Activated CD4-positive, alpha-beta T cell treated with anti-CD3 and anti-CD28 coated beads for 36 hours (primary cell): ENCODE measurements at regions of chr4 and their contacts with region 1.

Region 1: GRCh38 chr4:72302981-72303704 is 265.9 kb downstream of the ADAMTS3 start:
- DNase-seq: peak; percentile 51
- ATAC-seq: peak; percentile 65
- H3K4me3 Mint-ChIP-seq: no peak overlapping the region
- H3K27ac Mint-ChIP-seq: no peak overlapping the region
- H3K4me1 Mint-ChIP-seq: no peaks in the 10 kb centered on the region
- H3K27me3 Mint-ChIP-seq: no peaks in the 10 kb centered on the region

Region 2: DNA sequence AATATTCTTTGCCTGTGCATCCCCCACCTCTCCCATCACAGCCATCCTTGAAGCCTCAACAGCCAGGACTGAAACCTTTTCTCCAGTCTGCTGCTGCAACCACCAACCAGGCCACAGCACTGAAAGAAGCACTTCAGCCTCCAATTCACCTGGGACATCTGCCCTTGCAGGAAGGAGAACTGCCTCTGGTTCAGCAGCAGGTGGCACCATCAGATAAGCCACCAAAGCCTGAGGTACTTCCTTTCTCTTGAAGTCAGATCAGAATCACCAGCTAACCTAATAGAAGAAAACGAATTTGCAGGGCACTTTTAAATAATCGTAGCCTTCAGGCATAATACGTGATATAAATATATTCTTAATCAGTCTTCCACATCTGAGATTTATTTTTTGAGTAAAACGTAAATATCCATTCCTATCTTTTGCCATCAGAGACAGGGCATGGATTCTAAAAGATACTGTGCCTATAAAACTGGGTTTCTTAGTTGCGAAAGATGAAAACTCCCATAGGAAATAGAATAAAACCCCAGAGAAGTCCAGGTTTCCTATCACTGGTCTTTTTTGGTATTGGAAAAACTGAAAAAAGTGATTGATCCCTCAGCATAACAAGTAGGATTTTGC is 1701.6 kb before region 1 on chr4:
- CTCF ChIA-PET with region 1: interaction called, 3 read pairs
- POLR2A ChIA-PET with region 1: no interaction called
- intact Hi-C with region 1: loop called (anchors 2 to 5 kb)
- DNase-seq: peak; percentile 79
- ATAC-seq: peak; percentile 92
- H3K4me3 Mint-ChIP-seq: no peak overlapping the region
- H3K27ac Mint-ChIP-seq: no peak overlapping the region
- H3K4me1 Mint-ChIP-seq: no peaks in the 10 kb centered on the region
- H3K27me3 Mint-ChIP-seq: peaks cover 2% of the 10 kb centered on the region

Region 3: GRCh38 chr4:70651864-70652506 is 1651.2 kb before region 1 on chr4:
- CTCF ChIA-PET with region 1: no interaction called
- POLR2A ChIA-PET with region 1: no interaction called
- intact Hi-C with region 1: loop called in 1 of 2 experiments (anchors 5 kb)
- DNase-seq: no peak
- ATAC-seq: peak; percentile 39
- H3K4me3 Mint-ChIP-seq: no peak overlapping the region
- H3K27ac Mint-ChIP-seq: no peak overlapping the region
- H3K4me1 Mint-ChIP-seq: no peaks in the 10 kb centered on the region
- H3K27me3 Mint-ChIP-seq: peaks cover 3% of the 10 kb centered on the region

Region 4: DNA sequence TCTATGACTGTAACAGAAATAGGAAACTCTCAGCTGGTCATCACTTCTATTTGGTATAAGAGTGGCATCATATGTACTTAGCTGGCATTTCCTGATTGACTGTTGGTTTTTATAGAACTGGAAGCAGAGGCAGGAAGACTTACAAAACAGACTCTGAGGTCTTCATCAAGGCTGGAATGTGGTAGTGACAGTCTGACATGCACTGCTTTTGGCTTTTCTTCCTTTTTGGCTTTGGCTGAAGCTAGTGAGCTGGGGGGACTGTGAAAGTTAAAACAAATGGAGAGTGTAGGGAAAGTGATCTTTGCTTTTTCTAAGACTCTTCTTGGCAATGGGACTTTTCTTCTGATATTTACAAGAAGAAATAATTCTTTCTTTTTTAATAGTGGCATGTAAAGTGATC is 1085.5 kb before region 1 on chr4:
- CTCF ChIA-PET with region 1: no interaction called
- POLR2A ChIA-PET with region 1: no interaction called
- intact Hi-C with region 1: no loop called
- DNase-seq: no peak
- ATAC-seq: no peak
- H3K4me3 Mint-ChIP-seq: no peak overlapping the region
- H3K27ac Mint-ChIP-seq: no peak overlapping the region
- H3K4me1 Mint-ChIP-seq: no peaks in the 10 kb centered on the region
- H3K27me3 Mint-ChIP-seq: peaks cover 2% of the 10 kb centered on the region

Region 5: GRCh38 chr4:71732706-71733105 is 570.4 kb before region 1 on chr4:
- CTCF ChIA-PET with region 1: interaction called, 3 read pairs
- POLR2A ChIA-PET with region 1: no interaction called
- intact Hi-C with region 1: loop called in 1 of 2 experiments (anchors 5 kb)
- DNase-seq: no peak
- ATAC-seq: no peak
- H3K4me3 Mint-ChIP-seq: no peak overlapping the region
- H3K27ac Mint-ChIP-seq: no peak overlapping the region
- H3K4me1 Mint-ChIP-seq: no peaks in the 10 kb centered on the region
- H3K27me3 Mint-ChIP-seq: peaks cover 5% of the 10 kb centered on the region